Transverse colon (tissue), 4 donors: ENCODE measurements at regions of chr1 and their contacts with region 1.

Region 1: GRCh38 chr1:65067491-65068201 is 80.4 kb upstream of the AK4 start:
- DNase-seq: peak; percentile 71
- H3K4me3 ChIP-seq: peak overlapping the region; percentile 87 to 97 (median 92)
- H3K27ac ChIP-seq: peak overlapping the region; percentile 97 to 100 (median 98)
- H3K4me1 ChIP-seq: peaks cover 18 to 44% (median 23%) of the 10 kb centered on the region in 4 donors
- H3K27me3 ChIP-seq: no peaks in the 10 kb centered on the region
- CTCF ChIP-seq: no peak
- EP300 ChIP-seq: no peak
- POLR2A ChIP-seq: peak; percentile 88

Region 2: DNA sequence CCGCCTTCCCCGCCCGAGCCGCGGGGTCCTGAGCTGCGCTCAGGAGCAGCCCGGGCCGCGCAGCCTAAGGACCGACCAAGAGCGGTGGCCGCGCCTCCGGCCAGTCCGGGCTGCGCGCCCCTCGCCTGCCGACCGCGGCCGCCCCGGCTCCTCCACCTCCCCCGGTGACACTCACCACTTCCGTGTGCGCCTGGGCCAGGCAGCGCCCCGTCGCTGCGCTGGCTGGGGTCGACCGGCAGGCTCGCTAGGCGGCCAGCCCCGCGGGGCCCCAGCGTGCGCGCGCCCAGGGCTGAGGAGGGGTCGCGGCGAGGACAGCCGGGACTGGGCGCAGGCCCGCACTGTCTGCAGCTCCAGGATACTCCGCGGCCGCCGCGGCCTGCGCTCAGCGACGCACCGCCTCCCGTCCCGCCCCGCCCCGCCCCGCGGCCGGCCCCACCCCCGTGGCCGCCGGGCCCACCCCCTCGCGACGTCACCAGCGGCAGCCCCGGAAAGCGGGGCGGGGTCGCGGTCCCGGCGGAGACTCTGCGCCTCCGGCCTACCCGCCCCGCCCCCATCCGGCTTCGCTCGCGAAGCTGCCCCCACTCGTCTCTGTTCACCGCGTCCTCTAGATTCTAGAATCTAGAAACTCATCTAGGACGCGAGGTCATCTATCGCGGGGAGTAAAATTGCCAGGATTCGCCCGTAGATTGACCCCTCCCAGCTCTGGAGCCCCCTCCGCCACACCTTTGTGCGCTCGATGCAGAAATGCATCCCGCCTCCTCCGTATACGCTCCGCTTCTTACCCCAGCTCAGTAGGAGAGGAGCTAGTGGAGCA is 101.3 kb before region 1 on chr1 and contains the start of gene JAK1:
- in situ Hi-C with region 1: no loop called
- intact Hi-C with region 1: no loop called
- DNase-seq: peak; percentile 91
- H3K4me3 ChIP-seq: peak within 1 kb of the TSS; percentile 92 to 97 (median 95)
- H3K27ac ChIP-seq: peak within 1 kb of the TSS; percentile 97 to 98 (median 98)
- H3K4me1 ChIP-seq: peaks cover 15 to 46% (median 28%) of the 10 kb centered on the region in 4 donors
- H3K27me3 ChIP-seq: no peaks in the 10 kb centered on the region
- CTCF ChIP-seq: no peak
- EP300 ChIP-seq: no peak
- POLR2A ChIP-seq: peak; percentile 5
- total RNA-seq, gene JAK1: 52.9 to 169 (median 126) TPM

Region 3: DNA sequence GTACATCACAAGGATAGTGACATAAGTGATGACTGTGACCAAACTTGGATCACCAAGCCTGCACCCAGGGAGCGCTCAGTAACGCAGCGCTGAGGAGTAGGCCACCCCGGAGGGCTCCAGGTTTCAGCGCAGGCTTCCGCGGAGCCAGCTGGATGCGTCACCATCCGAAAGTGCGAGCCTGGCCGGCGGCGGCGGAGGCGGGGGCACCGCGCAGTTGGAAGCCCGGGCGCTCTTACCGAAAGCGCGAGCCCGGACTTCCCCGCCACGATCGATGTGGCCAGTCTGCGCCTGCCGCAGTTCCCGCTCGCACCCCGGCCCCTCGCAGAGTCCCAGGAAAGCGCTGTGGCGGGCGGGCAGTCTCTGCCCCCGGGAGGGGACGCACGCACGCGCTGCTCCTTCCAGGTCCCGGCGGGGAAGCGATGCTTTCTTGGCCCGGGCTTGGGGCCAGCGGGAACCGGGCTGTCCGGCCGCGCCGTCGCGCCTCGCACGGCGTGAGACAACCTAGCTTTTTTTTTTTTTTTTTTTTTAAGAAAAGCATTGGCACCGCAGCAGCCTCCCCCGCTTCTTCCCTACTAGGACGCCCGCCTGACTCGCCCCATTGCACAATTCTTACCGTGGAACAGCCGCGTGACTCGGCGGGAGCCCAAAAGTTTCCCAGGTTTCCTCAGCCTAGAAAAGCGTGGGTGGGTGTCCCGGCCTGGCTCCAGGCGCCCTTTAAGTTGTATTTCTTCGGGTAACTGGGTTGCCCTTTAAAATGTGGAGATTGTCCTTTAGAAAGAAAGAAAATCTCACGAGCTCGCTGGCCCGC is 64.9 kb before region 1 on chr1:
- in situ Hi-C with region 1: no loop called
- intact Hi-C with region 1: no loop called
- DNase-seq: peak; percentile 78
- H3K4me3 ChIP-seq: peak overlapping the region; percentile 45 to 71 (median 55)
- H3K27ac ChIP-seq: peak overlapping the region; percentile 81 to 92 (median 88)
- H3K4me1 ChIP-seq: peaks cover 0 to 14% (median 6%) of the 10 kb centered on the region in 4 donors
- H3K27me3 ChIP-seq: no peaks in the 10 kb centered on the region
- CTCF ChIP-seq: no peak
- EP300 ChIP-seq: no peak
- POLR2A ChIP-seq: peak; percentile 45

Region 4: GRCh38 chr1:65209005-65209885 is 141.6 kb after region 1 on chr1:
- in situ Hi-C with region 1: loop called in 2 of 4 experiments (anchors 10 to 25 kb)
- intact Hi-C with region 1: loop called (anchors 10 kb)
- DNase-seq: peak; percentile 16
- H3K4me3 ChIP-seq: no peak overlapping the region
- H3K27ac ChIP-seq: no peak overlapping the region
- H3K4me1 ChIP-seq: no peaks in the 10 kb centered on the region
- H3K27me3 ChIP-seq: no peaks in the 10 kb centered on the region
- CTCF ChIP-seq: peak; percentile 57 to 75 (median 62)
- EP300 ChIP-seq: no peak
- POLR2A ChIP-seq: no peak

Region 5: GRCh38 chr1:65419681-65420589 is 352.3 kb after region 1 on chr1:
- in situ Hi-C with region 1: loop called in 1 of 4 experiments (anchors 25 kb)
- intact Hi-C with region 1: no loop called
- DNase-seq: peak; percentile 99
- H3K4me3 ChIP-seq: peak overlapping the region; percentile 12 to 99 (median 95)
- H3K27ac ChIP-seq: peak overlapping the region; percentile 96 to 100 (median 99)
- H3K4me1 ChIP-seq: peaks cover 8 to 33% (median 13%) of the 10 kb centered on the region in 4 donors
- H3K27me3 ChIP-seq: no peaks in the 10 kb centered on the region
- CTCF ChIP-seq: no peak
- EP300 ChIP-seq: no peak
- POLR2A ChIP-seq: peak; percentile 52